Activated naive CD4-positive, alpha-beta T cell treated with anti-CD3 and anti-CD28 coated beads for 36 hours (primary cell): ENCODE measurements at regions of chr20 and their contacts with region 1.

Region 1: DNA sequence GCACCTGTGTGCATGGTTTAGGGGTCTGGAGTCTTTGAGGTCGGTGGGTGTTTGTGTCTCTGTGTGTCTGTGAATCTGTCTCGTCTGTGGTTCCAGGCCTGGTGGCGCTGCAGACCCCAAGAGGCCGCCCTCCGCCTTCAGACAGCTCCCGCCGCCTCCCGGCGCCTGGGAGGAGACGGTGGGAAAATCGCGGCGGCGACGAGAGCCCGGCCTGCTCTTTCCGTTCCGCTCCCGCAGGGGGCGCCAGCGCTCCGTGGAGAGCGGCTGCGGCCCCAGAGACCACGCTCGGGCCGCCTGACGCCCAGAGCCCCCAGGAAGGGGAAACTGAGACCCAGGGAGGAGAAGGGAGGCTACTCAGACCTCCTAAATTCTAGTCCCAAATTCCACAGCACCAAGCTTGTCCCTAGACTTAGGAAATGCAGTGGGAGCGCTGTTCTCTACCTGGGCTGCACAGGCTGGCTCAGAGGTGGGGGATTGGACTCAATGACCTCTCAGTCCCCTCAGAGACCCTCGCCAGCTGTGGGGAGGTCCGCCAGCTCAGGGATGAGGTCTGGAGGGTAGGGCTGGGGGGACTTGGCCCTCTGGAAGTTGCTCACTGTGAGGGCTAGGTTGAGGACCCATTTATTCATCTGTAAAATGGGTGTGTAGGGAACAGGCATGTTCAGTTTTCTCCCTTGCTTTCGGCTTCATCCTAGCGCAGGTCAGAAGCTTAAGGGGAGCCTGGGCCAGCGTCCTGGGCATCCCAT is 36.9 kb upstream of the BLCAP start:
- DNase-seq: peak; percentile 39
- H3K4me3 Mint-ChIP-seq: no peak overlapping the region
- H3K27ac Mint-ChIP-seq: no peak overlapping the region
- H3K4me1 Mint-ChIP-seq: peaks cover 2% of the 10 kb centered on the region
- H3K27me3 Mint-ChIP-seq: peaks cover 37% of the 10 kb centered on the region

Region 2: GRCh38 chr20:37356387-37356786 is 208.2 kb before region 1 on chr20:
- CTCF ChIA-PET with region 1: no interaction called
- intact Hi-C with region 1: no loop called
- DNase-seq: no peak
- H3K4me3 Mint-ChIP-seq: no peak overlapping the region
- H3K27ac Mint-ChIP-seq: no peak overlapping the region
- H3K4me1 Mint-ChIP-seq: no peaks in the 10 kb centered on the region
- H3K27me3 Mint-ChIP-seq: no peaks in the 10 kb centered on the region

Region 3: DNA sequence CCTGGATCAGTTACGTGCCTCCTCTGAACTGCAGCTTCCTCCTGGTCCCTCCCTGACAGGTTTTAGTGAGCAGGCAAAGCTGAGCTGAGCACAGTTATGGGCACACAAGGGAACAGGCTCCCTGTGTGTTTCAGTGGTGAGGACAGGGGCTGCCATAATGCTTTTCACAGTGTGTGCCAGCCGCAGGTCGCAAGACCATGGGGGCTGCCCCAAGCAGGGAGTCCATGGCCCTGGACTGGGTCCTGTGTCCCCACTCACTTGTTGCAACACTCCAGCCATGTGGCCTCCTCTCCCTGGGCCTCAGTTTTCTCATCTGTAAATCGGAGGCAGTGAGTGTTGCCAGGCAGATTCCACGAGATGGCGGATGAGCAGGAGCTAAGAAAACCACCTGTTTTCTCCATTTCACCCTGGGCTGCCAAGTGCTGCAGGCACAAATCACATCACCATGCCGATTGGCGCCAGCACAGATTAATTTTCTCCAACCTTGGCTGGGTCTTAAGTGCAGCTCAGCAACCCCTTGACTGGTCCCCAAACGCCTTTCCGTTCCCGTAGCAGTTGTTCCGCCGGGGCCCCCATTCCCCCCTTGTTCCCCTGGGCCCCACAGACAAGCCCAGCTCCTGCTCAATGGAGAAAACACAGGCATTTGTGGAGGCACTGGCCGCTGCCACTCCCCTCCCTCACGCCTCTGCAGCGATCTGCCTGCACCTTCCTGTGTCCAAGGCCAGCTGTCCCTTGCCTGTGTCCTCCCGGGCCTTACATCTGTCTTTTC is 100.7 kb before region 1 on chr20:
- CTCF ChIA-PET with region 1: no interaction called
- intact Hi-C with region 1: no loop called
- DNase-seq: no peak
- H3K4me3 Mint-ChIP-seq: no peak overlapping the region
- H3K27ac Mint-ChIP-seq: no peak overlapping the region
- H3K4me1 Mint-ChIP-seq: no peaks in the 10 kb centered on the region
- H3K27me3 Mint-ChIP-seq: peaks cover 4% of the 10 kb centered on the region

Region 4: DNA sequence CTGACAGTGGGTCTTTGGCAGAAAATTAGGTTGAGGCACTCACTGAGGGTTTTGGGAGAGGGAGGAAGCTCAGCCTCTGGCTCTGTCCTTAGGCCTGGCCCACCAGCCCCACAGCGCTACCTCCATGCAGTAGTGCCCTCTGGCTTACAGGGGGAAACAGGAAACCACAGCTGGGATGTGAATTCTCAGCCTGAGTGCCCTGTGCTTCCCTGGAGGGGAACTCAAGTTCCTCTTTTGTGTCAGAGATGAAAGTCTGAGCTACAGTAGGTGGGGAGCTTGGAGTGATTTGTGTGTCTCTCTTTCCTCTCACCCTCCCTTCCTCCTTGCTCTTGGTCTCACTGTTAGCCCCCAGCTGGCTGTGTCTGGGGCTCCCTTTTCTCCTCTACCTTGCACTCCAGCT is 11.3 kb after region 1 on chr20:
- CTCF ChIA-PET with region 1: interaction called, 10 read pairs
- intact Hi-C with region 1: no loop called
- DNase-seq: no peak
- H3K4me3 Mint-ChIP-seq: no peak overlapping the region
- H3K27ac Mint-ChIP-seq: no peak overlapping the region
- H3K4me1 Mint-ChIP-seq: no peaks in the 10 kb centered on the region
- H3K27me3 Mint-ChIP-seq: peaks cover 20% of the 10 kb centered on the region